ENCODE measurements at regions of chr9 and their contacts with region 1.

Region 1: DNA sequence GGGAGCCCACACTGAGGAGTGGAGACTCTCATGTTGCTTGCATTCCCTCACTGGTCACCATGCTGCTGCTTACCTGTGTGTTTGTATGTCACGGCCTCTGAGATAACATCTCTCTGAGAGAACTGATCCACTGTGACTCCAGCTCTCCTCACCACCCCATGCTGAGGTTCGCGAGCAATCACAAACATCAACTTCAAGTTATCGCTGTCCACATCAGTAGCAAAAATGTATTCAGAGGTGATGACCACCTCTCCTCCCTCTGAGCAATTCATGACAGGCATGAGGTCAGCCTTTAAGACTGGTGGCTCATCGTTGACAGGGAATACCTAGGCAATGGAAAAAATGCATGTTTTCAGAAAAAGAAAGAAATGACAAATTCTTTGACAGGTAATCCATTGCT is 90.2 kb upstream of the CER1 start:
- DNase-seq: no peak

Region 2: GRCh38 chr9:14827805-14828204 is 15.1 kb after region 1 on chr9:
- intact Hi-C with region 1: loop called in 1 of 2 experiments (anchors 1 kb)
- DNase-seq: no peak

Measured in posterior vena cava (tissue), 2 donors.